Endothelial cell of umbilical vein (primary cell): ENCODE measurements at regions of chr4 and their contacts with region 1.

Region 1: GRCh38 chr4:74675673-74676279 is 118.5 kb downstream of the BTC start:
- DNase-seq: peak; percentile 70
- H3K4me3 ChIP-seq: no peak overlapping the region
- H3K27ac ChIP-seq: no peak overlapping the region
- H3K4me1 ChIP-seq: peaks cover 9% of the 10 kb centered on the region
- H3K27me3 ChIP-seq: no peaks in the 10 kb centered on the region
- CTCF ChIP-seq: peak; percentile 66 to 76
- POLR2A ChIP-seq: no peak

Region 2: GRCh38 chr4:73299548-73300280 is 1376.1 kb before region 1 on chr4:
- CTCF ChIA-PET with region 1: no interaction called
- POLR2A ChIA-PET with region 1: no interaction called
- dilution Hi-C with region 1: no loop called
- intact Hi-C with region 1: no loop called
- DNase-seq: no peak
- H3K4me3 ChIP-seq: no peak overlapping the region
- H3K27ac ChIP-seq: no peak overlapping the region
- H3K4me1 ChIP-seq: no peaks in the 10 kb centered on the region
- H3K27me3 ChIP-seq: no peaks in the 10 kb centered on the region
- CTCF ChIP-seq: no peak
- POLR2A ChIP-seq: no peak

Region 3: GRCh38 chr4:74228691-74229640 is 446.8 kb before region 1 on chr4:
- CTCF ChIA-PET with region 1: interaction called, 24 read pairs
- POLR2A ChIA-PET with region 1: no interaction called
- dilution Hi-C with region 1: no loop called
- intact Hi-C with region 1: loop called (anchors 1 kb)
- DNase-seq: peak; percentile 74
- H3K4me3 ChIP-seq: no peak overlapping the region
- H3K27ac ChIP-seq: no peak overlapping the region
- H3K4me1 ChIP-seq: peaks cover 23% of the 10 kb centered on the region
- H3K27me3 ChIP-seq: no peaks in the 10 kb centered on the region
- CTCF ChIP-seq: peak; percentile 86 to 95
- POLR2A ChIP-seq: no peak

Region 4: GRCh38 chr4:74364652-74365491 is 310.9 kb before region 1 on chr4 and contains the start of gene EREG:
- CTCF ChIA-PET with region 1: interaction called, 50 read pairs
- POLR2A ChIA-PET with region 1: no interaction called
- dilution Hi-C with region 1: no loop called
- intact Hi-C with region 1: no loop called
- DNase-seq: peak; percentile 36
- H3K4me3 ChIP-seq: peak within 1 kb of the TSS; percentile 35 to 63 (median 38)
- H3K27ac ChIP-seq: no peak within 1 kb of the TSS
- H3K4me1 ChIP-seq: no peaks in the 10 kb centered on the region
- H3K27me3 ChIP-seq: no peaks in the 10 kb centered on the region
- CTCF ChIP-seq: no peak
- POLR2A ChIP-seq: no peak
- total RNA-seq, gene EREG: not detected in 2 replicates

Region 5: DNA sequence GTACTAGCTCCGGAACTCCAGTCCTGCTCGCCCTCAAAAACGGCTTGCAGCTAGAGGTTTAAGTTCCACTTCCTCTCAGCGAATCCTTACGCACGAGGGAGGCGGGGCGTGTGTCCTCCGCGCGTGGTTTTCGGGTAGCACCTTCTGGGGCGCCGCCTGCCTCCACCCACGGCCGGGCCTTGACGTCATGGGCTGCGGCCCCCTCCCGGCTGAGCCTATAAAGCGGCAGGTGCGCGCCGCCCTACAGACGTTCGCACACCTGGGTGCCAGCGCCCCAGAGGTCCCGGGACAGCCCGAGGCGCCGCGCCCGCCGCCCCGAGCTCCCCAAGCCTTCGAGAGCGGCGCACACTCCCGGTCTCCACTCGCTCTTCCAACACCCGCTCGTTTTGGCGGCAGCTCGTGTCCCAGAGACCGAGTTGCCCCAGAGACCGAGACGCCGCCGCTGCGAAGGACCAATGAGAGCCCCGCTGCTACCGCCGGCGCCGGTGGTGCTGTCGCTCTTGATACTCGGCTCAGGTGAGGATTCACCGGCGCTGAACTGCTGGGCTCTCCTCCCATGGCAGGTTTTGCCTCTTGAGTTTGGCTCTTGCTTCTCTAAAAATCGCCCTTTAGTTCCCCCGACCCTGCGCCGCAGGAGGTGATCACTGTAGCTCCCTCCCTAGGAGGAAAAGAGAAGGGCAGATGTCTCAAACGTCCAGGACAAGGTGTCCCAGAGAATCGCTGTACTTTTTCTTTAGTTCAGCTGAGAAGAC is 230.7 kb before region 1 on chr4 and contains the start of gene AREG:
- CTCF ChIA-PET with region 1: interaction called, 7 read pairs
- POLR2A ChIA-PET with region 1: no interaction called
- dilution Hi-C with region 1: no loop called
- intact Hi-C with region 1: loop called (anchors 2 kb)
- DNase-seq: peak; percentile 70
- H3K4me3 ChIP-seq: peak within 1 kb of the TSS; percentile 8 to 73 (median 45)
- H3K27ac ChIP-seq: no peak within 1 kb of the TSS
- H3K4me1 ChIP-seq: peaks cover 3% of the 10 kb centered on the region
- H3K27me3 ChIP-seq: no peaks in the 10 kb centered on the region
- CTCF ChIP-seq: peak; percentile 62
- POLR2A ChIP-seq: no peak
- total RNA-seq, gene AREG: 0.46 and 0.55 TPM in 2 replicates

Region 6: GRCh38 chr4:74543231-74543670 is 132.5 kb before region 1 on chr4:
- CTCF ChIA-PET with region 1: interaction called, 27 read pairs
- POLR2A ChIA-PET with region 1: no interaction called
- dilution Hi-C with region 1: no loop called
- intact Hi-C with region 1: no loop called
- DNase-seq: no peak
- H3K4me3 ChIP-seq: no peak overlapping the region
- H3K27ac ChIP-seq: no peak overlapping the region
- H3K4me1 ChIP-seq: peaks cover 48% of the 10 kb centered on the region
- H3K27me3 ChIP-seq: no peaks in the 10 kb centered on the region
- CTCF ChIP-seq: no peak
- POLR2A ChIP-seq: no peak

Region 7: DNA sequence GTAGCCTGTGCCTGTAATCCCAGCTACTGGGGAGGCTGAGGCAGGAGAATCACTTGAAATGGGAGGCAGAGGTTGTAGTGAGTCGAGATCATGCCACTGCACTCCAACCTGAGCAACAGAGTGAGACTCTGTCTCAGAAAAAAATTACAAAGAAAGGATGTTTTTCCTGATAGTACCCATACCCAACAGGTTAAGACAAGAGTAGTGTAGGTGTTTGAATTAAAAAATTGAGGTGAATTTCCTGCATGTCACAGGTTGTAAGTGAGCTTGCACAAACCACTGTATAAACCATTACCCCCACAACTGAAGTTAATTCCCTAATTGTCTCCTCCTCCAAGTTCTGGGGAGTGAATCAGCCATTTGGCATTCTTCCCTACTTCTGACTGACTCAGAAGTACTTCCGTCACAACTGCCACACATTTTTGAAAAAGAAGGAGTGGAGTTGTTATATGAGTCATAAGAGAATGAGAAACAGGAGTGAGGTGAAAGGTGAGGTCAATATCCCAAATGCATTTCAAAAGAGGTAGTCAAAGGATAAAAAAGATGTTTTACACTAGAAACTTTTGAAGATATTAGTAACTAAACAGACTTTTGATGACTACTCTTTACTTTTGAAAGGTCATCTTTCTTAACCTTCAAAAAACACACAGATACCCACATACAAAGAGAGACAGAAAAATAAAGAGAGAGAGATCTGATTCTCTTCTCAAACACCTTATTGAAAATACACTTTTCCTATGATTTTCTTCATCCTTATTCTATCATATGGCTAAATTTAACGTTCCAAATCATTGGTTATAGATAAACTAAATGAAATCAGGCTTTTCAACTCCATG is 16.0 kb before region 1 on chr4:
- CTCF ChIA-PET with region 1: interaction called, 7 read pairs
- POLR2A ChIA-PET with region 1: no interaction called
- dilution Hi-C with region 1: no loop called
- intact Hi-C with region 1: loop called (anchors 1 kb)
- DNase-seq: peak; percentile 98
- H3K4me3 ChIP-seq: no peak overlapping the region
- H3K27ac ChIP-seq: peak overlapping the region; percentile 26
- H3K4me1 ChIP-seq: peaks cover 9% of the 10 kb centered on the region
- H3K27me3 ChIP-seq: no peaks in the 10 kb centered on the region
- CTCF ChIP-seq: no peak
- POLR2A ChIP-seq: no peak